Activated naive CD8-positive, alpha-beta T cell treated with anti-CD3 and anti-CD28 coated beads, Interleukin-2, amount 10 ng/mL, durations not matched to agents 7 days and 5 days (primary cell): ENCODE measurements at regions of chr6 and their contacts with region 1.

Region 1: DNA sequence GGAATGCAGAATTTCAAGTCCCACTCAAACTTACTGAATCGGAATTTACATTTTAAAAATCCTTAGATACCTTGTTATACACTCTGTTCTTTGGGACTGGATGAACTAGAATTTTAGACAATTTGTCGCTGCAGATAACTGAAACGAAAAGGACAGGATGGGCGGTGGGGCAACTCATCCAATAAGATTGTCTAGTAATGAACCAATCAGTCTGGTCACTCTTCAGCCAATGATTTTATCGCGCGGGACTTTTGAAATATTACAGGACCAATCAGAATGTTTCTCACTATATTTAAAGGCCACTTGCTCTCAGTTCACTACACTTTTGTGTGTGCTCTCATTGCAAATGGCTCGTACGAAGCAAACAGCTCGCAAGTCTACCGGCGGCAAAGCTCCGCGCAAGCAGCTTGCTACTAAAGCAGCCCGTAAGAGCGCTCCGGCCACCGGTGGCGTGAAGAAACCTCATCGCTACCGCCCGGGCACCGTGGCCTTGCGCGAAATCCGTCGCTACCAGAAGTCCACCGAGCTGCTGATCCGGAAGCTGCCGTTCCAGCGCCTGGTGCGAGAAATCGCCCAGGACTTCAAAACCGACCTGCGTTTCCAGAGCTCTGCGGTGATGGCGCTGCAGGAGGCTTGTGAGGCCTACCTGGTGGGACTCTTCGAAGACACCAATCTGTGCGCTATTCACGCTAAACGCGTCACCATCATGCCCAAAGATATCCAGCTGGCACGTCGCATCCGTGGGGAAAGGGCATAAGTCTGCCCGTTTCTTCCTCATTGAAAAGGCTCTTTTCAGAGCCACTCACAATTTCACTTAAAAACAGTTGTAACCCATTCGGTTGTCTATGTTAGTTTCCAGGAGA is 41.9 kb upstream of the HFE start:
- DNase-seq: peak; percentile 82
- ATAC-seq: peak; percentile 56
- H3K4me3 Mint-ChIP-seq: peak overlapping the region; percentile 86
- H3K27ac Mint-ChIP-seq: peak overlapping the region; percentile 99
- H3K4me1 Mint-ChIP-seq: peaks cover 41% of the 10 kb centered on the region
- H3K27me3 Mint-ChIP-seq: no peaks in the 10 kb centered on the region

Region 2: DNA sequence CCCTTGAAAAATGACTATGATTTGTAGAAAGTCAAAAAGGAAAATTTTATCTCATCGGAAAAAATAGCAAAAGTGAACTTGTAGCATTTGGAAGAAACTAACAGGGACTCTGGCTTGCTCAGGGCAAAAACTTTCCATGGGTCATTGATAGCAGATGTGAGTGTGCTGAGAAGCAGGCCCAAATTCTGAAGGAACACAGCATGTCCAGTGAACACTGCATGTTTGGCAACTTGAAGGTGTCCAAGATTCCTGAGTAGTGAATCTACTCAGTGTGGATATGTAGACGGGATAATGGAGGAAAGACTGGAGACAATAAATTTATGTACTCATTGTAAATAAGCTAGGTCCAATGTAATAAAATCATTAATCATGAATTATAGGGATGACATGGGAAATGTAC is 123.0 kb before region 1 on chr6:
- POLR2A ChIA-PET with region 1: no interaction called
- DNase-seq: no peak
- ATAC-seq: no peak
- H3K4me3 Mint-ChIP-seq: no peak overlapping the region
- H3K27ac Mint-ChIP-seq: no peak overlapping the region
- H3K4me1 Mint-ChIP-seq: no peaks in the 10 kb centered on the region
- H3K27me3 Mint-ChIP-seq: no peaks in the 10 kb centered on the region

Region 3: DNA sequence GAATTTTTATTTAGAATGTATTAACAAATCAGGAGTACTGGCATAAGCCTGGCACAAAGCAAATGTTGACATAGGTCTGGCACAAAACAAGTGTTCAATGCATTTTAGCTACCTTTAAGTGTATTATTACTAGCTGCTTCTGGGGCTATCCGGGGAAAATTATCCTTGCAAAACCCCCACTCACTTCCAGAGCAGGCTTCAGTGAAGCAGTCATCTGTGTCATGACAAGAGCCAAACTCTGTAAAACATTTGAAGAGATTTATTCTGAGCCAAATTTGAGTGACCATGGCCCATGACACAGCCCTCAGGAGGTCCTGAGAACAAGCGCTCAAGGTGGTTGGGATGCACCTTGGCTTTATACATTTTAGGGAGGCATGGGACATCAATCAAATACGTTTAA is 89.1 kb before region 1 on chr6:
- POLR2A ChIA-PET with region 1: no interaction called
- DNase-seq: no peak
- ATAC-seq: no peak
- H3K4me3 Mint-ChIP-seq: no peak overlapping the region
- H3K27ac Mint-ChIP-seq: no peak overlapping the region
- H3K4me1 Mint-ChIP-seq: peaks cover 23% of the 10 kb centered on the region
- H3K27me3 Mint-ChIP-seq: peaks cover 5% of the 10 kb centered on the region

Region 4: DNA sequence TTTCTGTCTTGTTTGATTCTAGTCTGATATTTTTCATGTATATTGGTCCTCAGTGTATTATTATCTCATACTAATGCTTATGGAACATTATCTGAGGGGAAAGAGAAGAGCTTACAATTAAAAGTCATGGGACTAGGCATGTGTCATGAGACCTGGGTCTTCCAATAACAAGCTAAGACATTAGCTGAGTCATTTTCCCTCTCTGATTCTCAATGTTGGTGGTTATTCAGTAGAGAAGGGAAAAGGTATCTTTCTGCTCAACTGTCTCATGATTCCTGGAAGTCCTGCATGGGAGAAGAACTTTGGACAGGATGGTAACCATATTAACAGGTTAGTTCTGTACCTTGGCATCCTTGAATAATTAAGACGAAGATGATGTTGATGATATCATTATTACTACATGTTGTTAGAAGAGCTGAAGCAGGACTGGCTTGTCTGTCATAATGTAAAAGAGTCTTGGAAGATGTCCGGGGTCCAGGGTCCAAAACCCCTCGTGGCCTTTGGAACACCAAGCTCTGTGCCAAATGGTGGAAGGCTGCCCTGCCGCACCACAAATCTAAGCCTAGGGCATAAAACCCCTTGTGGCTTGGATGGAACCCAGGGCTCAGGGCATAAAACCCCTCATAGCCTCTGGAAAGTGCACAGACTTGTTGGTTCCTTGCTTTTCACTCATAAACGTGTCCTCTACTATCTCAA is 63.6 kb before region 1 on chr6:
- POLR2A ChIA-PET with region 1: no interaction called
- DNase-seq: no peak
- ATAC-seq: no peak
- H3K4me3 Mint-ChIP-seq: no peak overlapping the region
- H3K27ac Mint-ChIP-seq: no peak overlapping the region
- H3K4me1 Mint-ChIP-seq: peaks cover 2% of the 10 kb centered on the region
- H3K27me3 Mint-ChIP-seq: no peaks in the 10 kb centered on the region

Region 5: GRCh38 chr6:26017632-26017966 is 27.7 kb before region 1 on chr6:
- POLR2A ChIA-PET with region 1: interaction called, 1,993 read pairs
- DNase-seq: peak; percentile 84
- ATAC-seq: peak; percentile 24
- H3K4me3 Mint-ChIP-seq: peak overlapping the region; percentile 77
- H3K27ac Mint-ChIP-seq: peak overlapping the region; percentile 92
- H3K4me1 Mint-ChIP-seq: peaks cover 26% of the 10 kb centered on the region
- H3K27me3 Mint-ChIP-seq: no peaks in the 10 kb centered on the region

Region 6: DNA sequence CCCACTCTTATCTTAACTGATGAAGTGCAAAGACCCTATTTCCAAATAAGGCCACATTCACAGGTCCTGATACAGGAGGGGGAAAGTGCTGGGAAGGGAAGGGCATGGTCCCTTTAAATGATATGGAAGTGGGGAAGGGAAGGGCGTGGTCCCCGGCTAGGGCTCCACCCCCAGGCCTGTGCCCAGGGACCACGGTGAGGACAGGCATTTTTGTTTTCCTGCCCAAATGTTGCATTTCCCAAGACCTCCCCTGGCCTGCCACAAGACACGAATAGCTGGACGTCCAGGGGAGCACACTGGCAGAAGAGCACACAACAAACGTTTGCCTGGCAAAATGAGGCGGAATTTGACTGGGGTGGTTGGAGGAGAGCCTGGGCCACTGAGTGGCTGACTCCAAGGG is 25.8 kb after region 1 on chr6:
- POLR2A ChIA-PET with region 1: no interaction called
- DNase-seq: no peak
- ATAC-seq: no peak
- H3K4me3 Mint-ChIP-seq: no peak overlapping the region
- H3K27ac Mint-ChIP-seq: no peak overlapping the region
- H3K4me1 Mint-ChIP-seq: peaks cover 6% of the 10 kb centered on the region
- H3K27me3 Mint-ChIP-seq: peaks cover 25% of the 10 kb centered on the region

Region 7: GRCh38 chr6:26183581-26184366 is 138.5 kb after region 1 on chr6:
- POLR2A ChIA-PET with region 1: interaction called, 24 read pairs
- DNase-seq: peak; percentile 78
- ATAC-seq: peak; percentile 85
- H3K4me3 Mint-ChIP-seq: peak overlapping the region; percentile 96
- H3K27ac Mint-ChIP-seq: peak overlapping the region; percentile 99
- H3K4me1 Mint-ChIP-seq: peaks cover 48% of the 10 kb centered on the region
- H3K27me3 Mint-ChIP-seq: no peaks in the 10 kb centered on the region

Region 8: GRCh38 chr6:26216356-26216885 is 171.1 kb after region 1 on chr6:
- POLR2A ChIA-PET with region 1: interaction called, 38 read pairs
- DNase-seq: peak; percentile 77
- ATAC-seq: peak; percentile 75
- H3K4me3 Mint-ChIP-seq: no peak overlapping the region
- H3K27ac Mint-ChIP-seq: no peak overlapping the region
- H3K4me1 Mint-ChIP-seq: peaks cover 32% of the 10 kb centered on the region
- H3K27me3 Mint-ChIP-seq: no peaks in the 10 kb centered on the region

Region 9: GRCh38 chr6:27132532-27133280 is 1087.4 kb after region 1 on chr6:
- POLR2A ChIA-PET with region 1: interaction called, 12 read pairs
- DNase-seq: peak; percentile 90
- ATAC-seq: peak; percentile 76
- H3K4me3 Mint-ChIP-seq: no peak overlapping the region
- H3K27ac Mint-ChIP-seq: no peak overlapping the region
- H3K4me1 Mint-ChIP-seq: peaks cover 46% of the 10 kb centered on the region
- H3K27me3 Mint-ChIP-seq: no peaks in the 10 kb centered on the region

Region 10: DNA sequence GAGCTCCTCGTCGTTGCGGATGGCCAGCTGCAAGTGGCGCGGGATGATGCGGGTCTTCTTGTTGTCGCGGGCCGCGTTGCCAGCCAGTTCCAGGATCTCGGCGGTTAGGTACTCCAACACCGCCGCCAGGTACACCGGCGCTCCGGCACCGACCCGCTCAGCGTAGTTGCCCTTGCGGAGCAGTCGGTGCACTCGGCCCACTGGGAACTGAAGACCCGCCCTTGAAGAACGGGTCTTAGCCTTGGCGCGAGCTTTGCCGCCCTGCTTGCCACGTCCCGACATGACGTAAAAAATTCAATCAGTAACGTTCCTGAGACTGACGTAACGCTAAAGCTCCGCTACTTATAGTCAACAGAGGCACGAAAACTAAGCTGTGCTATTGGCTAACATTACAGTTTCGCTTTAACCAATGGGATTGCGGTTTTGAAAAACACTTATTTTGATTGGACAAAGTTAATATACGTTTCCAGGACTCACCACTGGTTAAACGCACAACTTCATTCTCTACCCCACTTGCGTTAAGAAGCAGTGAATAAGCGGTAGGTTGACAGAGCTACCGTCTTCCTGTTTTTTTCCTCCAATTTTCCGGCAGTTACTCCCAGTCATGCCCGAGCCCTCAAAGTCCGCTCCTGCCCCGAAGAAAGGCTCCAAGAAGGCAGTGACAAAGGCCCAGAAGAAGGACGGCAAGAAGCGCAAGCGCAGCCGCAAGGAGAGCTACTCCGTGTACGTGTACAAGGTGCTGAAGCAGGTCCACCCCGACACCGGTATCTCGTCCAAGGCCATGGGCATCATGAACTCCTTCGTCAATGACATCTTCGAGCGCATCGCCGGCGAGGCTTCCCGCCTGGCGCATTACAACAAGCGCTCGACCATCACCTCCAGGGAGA is 1793.0 kb after region 1 on chr6:
- POLR2A ChIA-PET with region 1: interaction called, 16 read pairs
- DNase-seq: peak; percentile 84
- ATAC-seq: peak; percentile 74
- H3K4me3 Mint-ChIP-seq: no peak overlapping the region
- H3K27ac Mint-ChIP-seq: no peak overlapping the region
- H3K4me1 Mint-ChIP-seq: peaks cover 26% of the 10 kb centered on the region
- H3K27me3 Mint-ChIP-seq: peaks cover 2% of the 10 kb centered on the region